ENCODE measurements at regions of chr11 and their contacts with region 1.

Region 1: GRCh38 chr11:86143087-86144030 is 74.5 kb upstream of the PICALM start:
- DNase-seq: peak in 1 of 2 donors; percentile 53
- ATAC-seq: peak; percentile 75 to 89 (median 83)
- H3K4me3 ChIP-seq: no peak overlapping the region
- H3K4me3 Mint-ChIP-seq: peak overlapping the region; percentile 49
- H3K27ac ChIP-seq: peak overlapping the region; percentile 84
- H3K27ac Mint-ChIP-seq: peak overlapping the region; percentile 74 to 93
- H3K4me1 ChIP-seq: peaks cover 79% of the 10 kb centered on the region
- H3K4me1 Mint-ChIP-seq: peaks cover 74 to 77% of the 10 kb centered on the region in 2 donors
- H3K27me3 ChIP-seq: no peaks in the 10 kb centered on the region
- H3K27me3 Mint-ChIP-seq: no peaks in the 10 kb centered on the region
- CTCF ChIP-seq: no peak

Region 2: DNA sequence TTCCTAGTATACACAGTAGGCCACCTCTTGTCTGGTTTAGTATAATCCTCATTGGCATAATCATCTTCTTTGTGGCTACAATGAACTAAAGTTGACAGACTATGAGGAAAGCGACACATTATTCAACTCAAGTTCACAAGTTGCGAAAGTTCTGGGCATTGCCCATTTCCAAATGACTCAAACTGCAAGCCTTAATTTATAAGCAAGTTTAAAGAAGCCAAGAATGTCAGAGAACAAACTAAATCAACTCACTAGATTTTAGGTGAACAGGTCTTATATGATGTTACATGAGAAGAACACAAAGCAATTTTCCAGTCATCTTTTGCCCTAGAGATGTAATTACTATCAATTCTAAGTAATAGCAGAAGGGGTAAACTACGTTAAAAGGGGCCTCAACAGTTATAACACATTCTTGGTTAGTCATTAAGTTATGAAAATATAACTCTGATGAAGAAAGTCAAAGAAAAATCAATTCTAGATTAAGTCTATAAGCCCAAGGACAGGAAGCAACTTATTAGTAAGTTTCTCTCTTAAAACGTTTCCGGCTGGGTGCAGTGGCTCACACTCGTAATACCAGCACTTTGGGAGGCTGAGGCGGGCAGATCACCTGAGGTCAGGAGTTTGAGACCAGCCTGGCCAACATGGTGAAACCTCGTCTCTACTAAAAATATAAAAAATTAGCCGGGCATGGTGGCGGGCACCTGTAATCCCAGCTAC is 95.9 kb before region 1 on chr11:
- intact Hi-C with region 1: loop called (anchors 5 kb)
- DNase-seq: peak in 1 of 2 donors; percentile 55
- ATAC-seq: peak; percentile 78 to 87 (median 84)
- H3K4me3 ChIP-seq: no peak overlapping the region
- H3K4me3 Mint-ChIP-seq: peak overlapping the region; percentile 68
- H3K27ac ChIP-seq: peak overlapping the region; percentile 49
- H3K27ac Mint-ChIP-seq: peak overlapping the region; percentile 83 to 87
- H3K4me1 ChIP-seq: peaks cover 52% of the 10 kb centered on the region
- H3K4me1 Mint-ChIP-seq: peaks cover 83 to 89% of the 10 kb centered on the region in 2 donors
- H3K27me3 ChIP-seq: no peaks in the 10 kb centered on the region
- H3K27me3 Mint-ChIP-seq: no peaks in the 10 kb centered on the region
- CTCF ChIP-seq: no peak

Region 3: DNA sequence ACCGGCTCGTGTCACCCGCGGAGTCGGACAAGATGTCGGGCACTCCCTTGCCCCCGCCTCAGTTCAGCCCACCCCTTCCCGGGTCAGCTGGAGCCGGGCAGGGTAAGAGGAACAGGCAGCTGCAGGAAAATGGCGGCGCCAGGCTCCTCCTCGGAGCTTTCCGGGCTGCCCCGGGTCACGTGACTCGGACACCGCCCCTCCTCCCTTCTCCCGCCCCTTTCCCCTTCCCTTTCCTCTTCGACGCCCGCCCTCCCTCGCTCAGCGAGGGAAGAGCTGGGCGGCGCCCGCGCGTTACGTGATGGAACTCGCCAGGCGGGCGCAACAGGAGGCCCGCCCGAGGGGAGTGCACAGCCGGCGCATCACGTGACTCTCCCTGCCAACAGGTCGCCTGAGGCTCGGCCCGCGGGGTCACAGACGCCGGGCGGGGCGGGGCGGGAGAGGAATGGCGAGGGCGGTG is 74.4 kb before region 1 on chr11 and contains the start of gene PICALM:
- intact Hi-C with region 1: loop called (anchors 5 kb)
- DNase-seq: peak; percentile 90 to 99
- ATAC-seq: peak; percentile 71 to 92 (median 81)
- H3K4me3 ChIP-seq: peak within 1 kb of the TSS; percentile 76
- H3K4me3 Mint-ChIP-seq: peak within 1 kb of the TSS; percentile 100
- H3K27ac ChIP-seq: peak within 1 kb of the TSS; percentile 91
- H3K27ac Mint-ChIP-seq: peak within 1 kb of the TSS; percentile 97 to 100
- H3K4me1 ChIP-seq: peaks cover 20% of the 10 kb centered on the region
- H3K4me1 Mint-ChIP-seq: peaks cover 47 to 49% of the 10 kb centered on the region in 2 donors
- H3K27me3 ChIP-seq: no peaks in the 10 kb centered on the region
- H3K27me3 Mint-ChIP-seq: no peaks in the 10 kb centered on the region
- CTCF ChIP-seq: no peak
- total RNA-seq, gene PICALM: 262 to 291 (median 285) TPM

Region 4: GRCh38 chr11:86202013-86202336 is 58.6 kb after region 1 on chr11:
- intact Hi-C with region 1: loop called (anchors 5 kb)
- DNase-seq: peak in 1 of 2 donors; percentile 37
- ATAC-seq: peak; percentile 52 to 56 (median 54)
- H3K4me3 ChIP-seq: peak overlapping the region; percentile 34
- H3K4me3 Mint-ChIP-seq: no peak overlapping the region
- H3K27ac ChIP-seq: peak overlapping the region; percentile 64
- H3K27ac Mint-ChIP-seq: no peak overlapping the region
- H3K4me1 ChIP-seq: peaks cover 6% of the 10 kb centered on the region
- H3K4me1 Mint-ChIP-seq: no peaks in the 10 kb centered on the region
- H3K27me3 ChIP-seq: no peaks in the 10 kb centered on the region
- H3K27me3 Mint-ChIP-seq: no peaks in the 10 kb centered on the region
- CTCF ChIP-seq: no peak

Measured in natural killer cell (primary cell).